A549 (cell line): ENCODE measurements at regions of chr16 and their contacts with region 1.

Region 1: DNA sequence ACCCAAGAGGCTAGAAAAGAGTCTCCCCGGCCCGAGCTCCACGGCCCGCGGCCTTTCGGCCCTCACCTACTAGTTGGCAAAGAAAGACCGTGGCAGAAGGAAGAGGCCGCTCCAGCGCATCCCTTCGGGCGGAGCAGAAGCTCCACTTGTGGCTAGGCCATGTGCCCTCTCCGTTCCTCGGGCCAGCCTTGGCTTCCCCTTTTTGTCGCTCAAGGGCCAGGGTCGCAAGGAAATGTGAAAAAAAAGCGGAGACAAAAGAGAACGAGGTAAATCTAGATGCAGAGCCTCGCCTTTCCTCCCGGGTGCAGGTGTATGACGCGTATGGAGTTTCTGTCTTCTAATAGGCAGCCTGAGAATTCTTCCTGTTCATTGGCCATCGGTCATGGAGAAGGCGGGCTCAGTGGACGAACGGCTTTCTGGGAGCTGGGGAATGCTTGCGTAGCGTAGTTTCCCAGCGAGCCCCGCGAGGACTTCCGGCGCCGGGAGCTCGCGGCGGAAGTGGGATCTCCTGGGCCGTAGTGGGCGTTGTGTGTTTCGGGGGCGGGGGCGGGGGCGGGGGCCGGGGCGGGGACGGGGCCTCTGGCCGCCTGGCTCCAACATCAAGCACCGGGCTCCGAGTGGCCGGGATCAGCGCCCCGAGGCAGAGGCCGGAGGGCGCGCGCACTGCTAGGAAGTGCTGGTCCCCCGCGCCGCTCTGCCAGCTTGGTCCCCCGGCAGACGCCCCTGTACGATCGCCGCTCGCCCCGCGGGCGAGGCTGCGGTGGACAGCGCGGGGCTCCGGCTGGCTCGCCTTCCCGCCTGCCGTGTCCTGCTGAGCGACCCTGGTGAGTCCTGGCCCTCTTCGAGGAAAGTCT is at the start of gene ZNF213:
- DNase-seq: peak; percentile 94 to 98
- ATAC-seq: peak; percentile 95 to 96
- H3K4me3 ChIP-seq: peak within 1 kb of the TSS; percentile 98
- H3K27ac ChIP-seq: peak within 1 kb of the TSS; percentile 90 to 98
- H3K4me1 ChIP-seq: peaks cover 14% of the 10 kb centered on the region; the same call in 1 of the 3 replicates
- CTCF ChIP-seq: no peak
- EP300 ChIP-seq: no peak
- POLR2A ChIP-seq: peak; percentile 70
- RAD21 ChIP-seq: no peak
- polyA plus RNA-seq, gene ZNF213: 0.72 and 1.8 TPM in 2 replicates

Region 2: GRCh38 chr16:3123986-3124886 is 10.6 kb before region 1 on chr16:
- CTCF ChIA-PET with region 1: interaction called, 57 read pairs
- POLR2A ChIA-PET with region 1: interaction called, 8 read pairs
- DNase-seq: peak; percentile 81 to 92
- ATAC-seq: peak; percentile 92 to 94
- H3K4me3 ChIP-seq: peak overlapping the region; percentile 88
- H3K27ac ChIP-seq: peak overlapping the region; percentile 82 to 86
- H3K4me1 ChIP-seq: peaks cover 12% of the 10 kb centered on the region; the same call in 1 of the 3 replicates
- CTCF ChIP-seq: no peak
- EP300 ChIP-seq: no peak
- POLR2A ChIP-seq: peak; percentile 68
- RAD21 ChIP-seq: no peak

Region 3: DNA sequence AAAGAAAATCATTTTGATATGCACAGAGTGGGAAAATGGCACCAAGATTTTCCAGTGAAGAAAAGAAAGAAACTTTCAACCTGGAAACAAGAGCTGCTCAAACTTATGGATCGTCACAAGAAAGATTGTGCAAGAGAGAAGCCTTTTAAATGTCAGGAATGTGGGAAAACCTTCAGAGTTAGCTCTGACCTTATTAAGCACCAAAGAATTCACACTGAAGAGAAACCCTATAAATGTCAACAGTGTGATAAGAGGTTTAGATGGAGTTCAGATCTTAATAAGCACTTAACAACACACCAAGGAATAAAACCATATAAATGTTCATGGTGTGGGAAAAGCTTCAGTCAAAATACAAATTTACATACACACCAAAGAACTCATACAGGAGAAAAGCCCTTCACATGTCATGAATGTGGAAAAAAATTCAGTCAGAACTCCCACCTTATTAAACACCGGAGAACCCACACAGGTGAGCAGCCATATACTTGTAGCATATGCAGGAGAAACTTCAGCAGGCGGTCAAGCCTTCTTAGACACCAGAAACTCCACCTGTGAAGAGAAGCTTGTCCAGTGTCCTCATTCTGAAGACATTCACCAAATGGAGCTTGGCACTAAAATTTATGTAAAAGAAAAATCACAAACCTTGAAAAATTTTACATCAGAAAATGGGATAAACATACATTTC is 182.7 kb after region 1 on chr16:
- CTCF ChIA-PET with region 1: no interaction called
- POLR2A ChIA-PET with region 1: no interaction called
- DNase-seq: peak in 1 of 2 experiments; percentile 51
- ATAC-seq: no peak
- H3K4me3 ChIP-seq: no peak overlapping the region
- H3K27ac ChIP-seq: no peak overlapping the region
- H3K4me1 ChIP-seq: no peaks in the 10 kb centered on the region
- CTCF ChIP-seq: no peak
- EP300 ChIP-seq: no peak
- POLR2A ChIP-seq: no peak
- RAD21 ChIP-seq: no peak